Mammary epithelial cell (primary cell): ENCODE measurements at regions of chr12 and their contacts with region 1.

Region 1: DNA sequence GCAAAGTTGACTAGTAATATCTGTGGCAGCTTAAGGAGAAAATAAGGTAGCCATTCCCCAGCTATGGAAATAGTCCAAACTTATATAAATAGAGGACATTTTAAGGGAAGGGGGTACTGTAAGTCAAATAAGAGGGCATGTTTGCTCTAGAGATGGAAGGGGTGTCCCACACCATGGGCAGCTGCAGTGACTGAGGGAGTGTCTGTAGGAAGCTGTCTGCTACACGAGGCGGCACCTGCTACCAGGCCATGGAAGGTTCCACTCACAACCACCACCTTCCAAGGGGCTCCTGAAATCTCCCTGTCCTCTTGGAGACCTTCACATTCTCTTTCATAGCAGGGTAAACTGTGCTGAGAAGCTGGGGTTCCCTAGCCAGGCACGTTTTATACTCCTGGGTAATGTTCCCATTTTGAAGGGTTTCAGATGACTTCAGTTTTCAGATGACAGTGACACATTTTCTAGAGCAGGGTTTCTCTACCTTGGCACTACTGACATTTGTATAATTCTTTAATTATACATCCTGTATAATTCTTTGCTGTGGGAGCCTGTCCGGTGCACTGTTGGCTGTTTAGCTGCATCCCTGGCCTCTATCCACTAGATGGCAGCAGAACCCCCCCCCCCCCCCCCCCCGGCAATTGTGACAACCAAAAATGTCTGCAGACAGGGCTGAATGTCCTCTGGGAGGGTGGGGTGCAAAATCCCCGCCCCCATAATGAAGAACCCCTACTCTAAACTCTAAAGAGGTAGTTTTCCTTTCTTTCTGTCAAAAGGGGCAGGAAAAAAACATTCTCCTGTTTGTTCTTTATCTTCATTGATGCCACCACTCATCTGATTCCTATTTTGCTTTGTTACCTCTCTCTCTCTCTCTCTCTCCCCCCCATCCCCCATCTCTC is 11.6 kb upstream of the SMCO2 start:
- DNase-seq: no peak
- H3K4me3 ChIP-seq: no peak overlapping the region
- H3K27ac ChIP-seq: no peak overlapping the region
- H3K4me1 ChIP-seq: no peaks in the 10 kb centered on the region
- H3K27me3 ChIP-seq: no peaks in the 10 kb centered on the region
- CTCF ChIP-seq: peak; percentile 34 to 68

Region 2: GRCh38 chr12:27474344-27474743 is 39.4 kb after region 1 on chr12:
- CTCF ChIA-PET with region 1: no interaction called
- dilution Hi-C with region 1: no loop called
- in situ Hi-C with region 1: no loop called
- intact Hi-C with region 1: no loop called
- DNase-seq: peak; percentile 81
- H3K4me3 ChIP-seq: peak overlapping the region in 1 of 3 experiments; percentile 40
- H3K27ac ChIP-seq: no peak overlapping the region
- H3K4me1 ChIP-seq: peaks cover 16% of the 10 kb centered on the region
- H3K27me3 ChIP-seq: no peaks in the 10 kb centered on the region
- CTCF ChIP-seq: no peak

Region 3: GRCh38 chr12:27635349-27635972 is 200.5 kb after region 1 on chr12:
- CTCF ChIA-PET with region 1: no interaction called
- dilution Hi-C with region 1: no loop called
- in situ Hi-C with region 1: no loop called
- intact Hi-C with region 1: loop called (anchors 1 kb)
- DNase-seq: peak; percentile 46
- H3K4me3 ChIP-seq: no peak overlapping the region
- H3K27ac ChIP-seq: no peak overlapping the region
- H3K4me1 ChIP-seq: peaks cover 6% of the 10 kb centered on the region
- H3K27me3 ChIP-seq: no peaks in the 10 kb centered on the region
- CTCF ChIP-seq: peak; percentile 54 to 69

Region 4: DNA sequence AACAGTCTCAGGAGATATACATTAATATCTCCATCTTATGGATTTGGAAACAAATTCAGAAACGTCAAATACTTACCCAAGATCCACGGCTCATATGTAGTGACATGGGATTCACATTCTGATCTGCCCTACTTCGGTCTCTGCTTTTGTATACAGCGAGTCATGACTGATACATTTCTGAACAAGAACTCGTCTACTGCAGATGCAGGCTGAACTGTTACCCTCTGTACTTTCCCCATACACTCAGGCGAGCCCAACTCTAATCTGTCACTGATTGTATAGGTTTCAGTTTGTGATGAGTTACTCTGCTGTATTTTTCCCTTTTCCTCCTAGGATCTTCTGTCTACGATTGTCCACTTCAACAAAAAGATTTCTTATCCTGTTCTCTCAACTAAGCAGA is 1196.9 kb after region 1 on chr12:
- CTCF ChIA-PET with region 1: interaction called, 13 read pairs
- dilution Hi-C with region 1: no loop called
- in situ Hi-C with region 1: no loop called
- intact Hi-C with region 1: no loop called
- DNase-seq: peak; percentile 51
- H3K4me3 ChIP-seq: no peak overlapping the region
- H3K27ac ChIP-seq: no peak overlapping the region
- H3K4me1 ChIP-seq: no peaks in the 10 kb centered on the region
- H3K27me3 ChIP-seq: peaks cover 6% of the 10 kb centered on the region
- CTCF ChIP-seq: no peak